ENCODE measurements at regions of chr11 and their contacts with region 1.

Region 1: DNA sequence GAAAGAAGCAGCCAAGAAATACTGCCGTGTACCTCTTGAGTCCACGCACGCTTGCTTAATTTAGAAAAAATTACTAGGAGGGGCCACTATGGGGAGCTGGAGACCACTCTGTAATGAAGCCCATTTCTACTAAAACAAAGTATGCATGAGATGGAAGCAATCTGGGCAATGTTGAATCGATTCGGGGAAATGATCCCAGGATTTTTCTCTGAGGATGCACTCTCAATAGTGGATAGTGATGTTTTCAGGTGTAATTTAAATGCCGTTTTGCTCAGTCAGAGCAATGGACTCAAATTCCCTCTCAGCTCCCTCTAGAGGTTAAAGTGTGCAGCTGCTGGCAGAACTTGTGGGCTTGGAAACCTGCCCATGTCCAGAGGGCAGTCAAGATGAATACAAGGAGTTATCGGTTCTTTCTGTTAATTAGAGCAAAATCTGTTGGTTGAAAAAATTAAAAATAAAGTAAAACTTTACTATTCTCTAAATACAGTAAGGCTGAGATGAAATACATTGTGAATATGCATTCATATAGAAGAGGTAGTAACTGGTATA is 64.1 kb downstream of the ME3 start:
- DNase-seq: peak; percentile 82
- H3K4me3 Mint-ChIP-seq: no peak overlapping the region
- H3K27ac Mint-ChIP-seq: no peak overlapping the region
- H3K4me1 Mint-ChIP-seq: peaks cover 20% of the 10 kb centered on the region
- H3K27me3 Mint-ChIP-seq: no peaks in the 10 kb centered on the region
- CTCF ChIP-seq: peak; percentile 89

Region 2: GRCh38 chr11:86386746-86387145 is 221.6 kb before region 1 on chr11:
- CTCF ChIA-PET with region 1: no interaction called
- POLR2A ChIA-PET with region 1: no interaction called
- intact Hi-C with region 1: no loop called
- DNase-seq: no peak
- H3K4me3 Mint-ChIP-seq: no peak overlapping the region
- H3K27ac Mint-ChIP-seq: no peak overlapping the region
- H3K4me1 Mint-ChIP-seq: no peaks in the 10 kb centered on the region
- H3K27me3 Mint-ChIP-seq: no peaks in the 10 kb centered on the region
- CTCF ChIP-seq: no peak

Region 3: DNA sequence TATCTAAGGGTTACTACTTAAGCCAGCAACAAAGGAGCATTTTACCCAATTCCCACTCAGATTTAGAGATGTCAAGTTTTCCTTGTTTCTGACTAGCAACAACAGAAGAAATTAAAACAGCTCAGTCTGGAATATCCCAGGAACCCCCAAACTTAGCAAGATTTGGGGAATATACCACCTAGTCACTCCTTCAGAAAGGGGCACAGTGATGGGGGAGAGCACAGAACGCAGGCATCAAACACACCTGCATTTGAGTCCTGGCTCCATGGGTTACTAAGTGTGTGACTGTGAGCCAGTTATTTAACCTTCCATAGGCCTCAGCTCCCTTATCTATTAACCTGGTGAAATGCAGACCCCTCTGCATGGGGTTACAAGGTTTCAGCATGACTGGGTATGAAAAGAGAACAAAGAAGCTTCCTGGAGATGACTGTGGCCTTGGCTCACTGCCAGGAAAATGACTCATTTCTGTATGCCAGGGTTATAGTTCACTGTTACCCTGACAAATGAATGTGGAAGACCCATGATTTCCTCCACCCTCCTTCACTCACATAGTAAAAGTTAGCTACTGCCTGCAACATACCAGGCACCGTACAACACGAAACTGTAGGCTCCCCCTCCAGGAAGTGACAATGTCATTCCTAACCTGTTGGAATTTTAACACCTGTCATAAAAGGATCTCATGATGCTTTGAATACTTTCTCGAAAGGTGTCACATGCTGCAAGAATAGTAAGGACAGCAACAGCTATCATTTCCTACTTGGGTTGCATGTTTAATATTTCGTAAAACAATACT is 15.5 kb before region 1 on chr11:
- CTCF ChIA-PET with region 1: interaction called, 22 read pairs
- POLR2A ChIA-PET with region 1: interaction called, 4 read pairs
- intact Hi-C with region 1: no loop called
- DNase-seq: peak; percentile 88
- H3K4me3 Mint-ChIP-seq: no peak overlapping the region
- H3K27ac Mint-ChIP-seq: no peak overlapping the region
- H3K4me1 Mint-ChIP-seq: peaks cover 17% of the 10 kb centered on the region
- H3K27me3 Mint-ChIP-seq: no peaks in the 10 kb centered on the region
- CTCF ChIP-seq: no peak

Region 4: DNA sequence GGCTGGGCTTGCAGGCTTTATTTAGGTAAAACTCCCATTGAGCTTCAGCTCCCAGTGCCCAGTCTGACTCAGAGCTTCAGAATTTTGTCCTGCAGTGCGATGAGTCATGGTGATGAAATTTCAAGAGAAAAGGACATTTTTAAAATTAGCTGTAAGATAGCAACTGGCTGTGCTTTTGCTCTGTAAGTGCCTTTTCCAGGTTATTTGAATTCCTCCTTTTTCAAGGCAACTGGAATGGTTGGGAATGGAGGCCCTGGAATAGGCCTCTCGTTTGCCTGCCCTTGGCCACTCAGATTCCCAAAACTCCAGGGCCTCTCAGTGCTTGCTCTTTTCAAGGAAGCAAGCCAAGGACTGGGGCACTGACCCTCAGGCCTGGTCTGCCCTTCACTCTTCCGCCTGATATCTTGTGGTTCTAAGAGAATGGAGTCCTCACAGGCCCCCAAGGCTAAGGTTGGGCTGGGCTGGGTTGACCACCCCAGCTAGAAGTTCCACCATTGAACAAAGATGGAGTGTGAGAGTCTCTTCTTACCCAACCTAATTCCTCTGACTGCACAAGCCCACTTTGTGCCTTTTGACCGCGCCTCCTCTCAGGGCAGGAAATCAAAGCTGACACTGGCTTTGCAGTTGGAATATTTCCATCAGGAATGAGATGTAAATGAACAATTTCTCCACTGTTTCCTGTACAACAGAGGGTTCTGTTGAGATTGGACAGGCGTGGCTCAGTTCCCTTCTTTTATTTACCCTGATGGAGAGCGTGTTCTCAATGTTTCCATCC is 132.6 kb after region 1 on chr11:
- CTCF ChIA-PET with region 1: no interaction called
- POLR2A ChIA-PET with region 1: no interaction called
- intact Hi-C with region 1: loop called (anchors 2 kb)
- DNase-seq: peak; percentile 94
- H3K4me3 Mint-ChIP-seq: peak overlapping the region; percentile 49
- H3K27ac Mint-ChIP-seq: peak overlapping the region; percentile 96
- H3K4me1 Mint-ChIP-seq: peaks cover 72% of the 10 kb centered on the region
- H3K27me3 Mint-ChIP-seq: no peaks in the 10 kb centered on the region
- CTCF ChIP-seq: no peak

Region 5: DNA sequence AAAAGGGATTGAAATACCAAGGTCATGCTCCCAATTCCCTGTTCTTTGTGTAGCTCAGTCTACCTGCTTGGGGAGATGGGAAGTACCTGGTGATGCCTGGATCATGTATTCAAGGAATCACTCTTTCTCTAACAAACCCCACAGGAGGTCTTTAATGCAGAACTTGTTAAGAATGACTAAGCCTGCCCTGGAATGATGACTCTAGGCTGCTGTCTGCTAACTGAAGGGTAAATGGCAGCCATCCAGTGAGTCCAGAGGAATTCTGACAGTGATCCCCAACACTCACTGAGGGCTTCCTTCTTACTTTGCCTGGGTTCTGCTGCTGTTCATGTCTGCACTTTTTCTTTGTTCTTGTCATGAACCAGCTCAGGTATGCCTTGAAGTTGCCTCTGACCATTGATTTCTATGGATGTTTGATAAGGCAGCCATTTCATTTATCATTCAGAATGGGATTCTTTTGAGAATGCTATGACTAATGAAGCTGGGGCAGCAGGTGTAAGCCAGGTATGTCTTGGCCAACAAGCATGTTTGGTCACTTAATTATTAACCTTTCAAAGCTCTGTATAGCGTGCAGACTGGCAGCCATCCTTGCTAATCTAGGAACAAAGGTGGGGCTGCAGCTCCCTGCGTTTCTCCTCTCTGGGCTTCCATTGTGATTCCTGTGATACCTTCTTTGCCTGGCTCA is 203.5 kb after region 1 on chr11:
- CTCF ChIA-PET with region 1: interaction called, 22 read pairs
- POLR2A ChIA-PET with region 1: no interaction called
- intact Hi-C with region 1: no loop called
- DNase-seq: peak; percentile 54
- H3K4me3 Mint-ChIP-seq: no peak overlapping the region
- H3K27ac Mint-ChIP-seq: no peak overlapping the region
- H3K4me1 Mint-ChIP-seq: peaks cover 13% of the 10 kb centered on the region
- H3K27me3 Mint-ChIP-seq: no peaks in the 10 kb centered on the region
- CTCF ChIP-seq: no peak

Region 6: DNA sequence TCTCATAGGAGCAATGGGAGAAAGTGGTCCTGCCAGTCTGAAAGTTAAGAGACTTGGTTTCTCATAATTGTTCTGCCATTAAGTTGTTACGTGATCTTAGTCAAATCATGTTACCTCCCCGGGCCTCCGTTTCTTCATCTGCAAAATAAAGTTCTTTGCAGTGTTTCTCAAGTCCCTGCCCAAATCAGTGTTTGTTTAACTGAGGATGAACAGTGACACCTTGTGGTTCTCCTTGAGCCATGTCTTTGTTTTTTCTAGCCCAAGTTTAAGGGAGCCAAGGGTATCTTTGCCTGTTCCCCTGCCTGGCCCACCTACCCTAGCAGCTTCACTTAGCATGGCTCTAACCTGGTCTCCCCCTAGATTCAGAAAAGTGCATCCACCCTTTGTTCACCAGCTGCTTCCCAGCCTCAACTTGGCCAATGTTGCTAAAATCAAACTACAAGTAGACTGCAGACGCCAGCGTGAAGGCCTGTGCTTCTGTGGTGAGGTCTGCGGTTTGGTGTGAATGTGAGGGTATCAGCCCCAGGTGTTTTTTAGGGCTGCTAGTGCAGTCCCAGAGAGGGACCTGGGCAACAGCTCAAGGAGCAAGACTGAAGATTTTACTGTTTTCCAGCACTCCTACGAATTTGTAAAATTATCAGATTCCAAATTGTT is 311.4 kb after region 1 on chr11:
- CTCF ChIA-PET with region 1: no interaction called
- POLR2A ChIA-PET with region 1: no interaction called
- intact Hi-C with region 1: loop called (anchors 2 kb)
- DNase-seq: peak; percentile 68
- H3K4me3 Mint-ChIP-seq: no peak overlapping the region
- H3K27ac Mint-ChIP-seq: no peak overlapping the region
- H3K4me1 Mint-ChIP-seq: peaks cover 19% of the 10 kb centered on the region
- H3K27me3 Mint-ChIP-seq: no peaks in the 10 kb centered on the region
- CTCF ChIP-seq: peak; percentile 69

Region 7: GRCh38 chr11:86990515-86990914 is 382.2 kb after region 1 on chr11:
- CTCF ChIA-PET with region 1: no interaction called
- POLR2A ChIA-PET with region 1: no interaction called
- intact Hi-C with region 1: no loop called
- DNase-seq: peak; percentile 63
- H3K4me3 Mint-ChIP-seq: no peak overlapping the region
- H3K27ac Mint-ChIP-seq: no peak overlapping the region
- H3K4me1 Mint-ChIP-seq: peaks cover 13% of the 10 kb centered on the region
- H3K27me3 Mint-ChIP-seq: no peaks in the 10 kb centered on the region
- CTCF ChIP-seq: no peak

Measured in MCF 10A (cell line).